ENCODE measurements at regions of chr1 and their contacts with region 1.

Region 1: DNA sequence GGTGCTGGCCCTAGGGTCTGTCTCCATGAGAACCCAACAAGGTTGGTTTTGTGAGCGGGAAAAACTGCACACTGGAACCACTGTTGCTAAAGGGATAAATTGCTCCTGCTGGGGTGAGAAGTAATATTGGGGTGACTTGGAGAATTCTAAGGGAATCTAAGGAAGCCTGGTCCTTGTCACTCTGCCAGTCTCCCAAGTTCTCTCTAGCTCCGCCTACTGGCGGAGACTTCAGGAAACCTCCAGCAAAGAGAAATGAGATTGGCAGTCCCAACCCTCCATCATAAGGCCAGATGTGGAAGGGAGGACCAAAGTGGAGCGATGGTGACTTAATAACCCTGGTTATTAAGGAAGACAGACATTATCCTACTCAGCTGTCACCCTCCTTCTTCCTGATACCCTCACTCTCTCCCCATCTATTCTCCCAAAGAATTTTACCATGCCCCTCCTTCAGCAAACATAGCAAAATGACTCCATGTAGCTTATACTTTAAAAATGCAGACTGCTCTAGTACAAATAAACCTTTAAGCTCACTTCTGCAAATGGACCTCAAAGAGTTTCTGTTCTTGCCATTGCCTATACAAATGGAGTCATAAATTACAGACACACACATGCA is 2.7 kb downstream of the LCE1F start:
- DNase-seq: no peak
- H3K4me3 ChIP-seq: no peak overlapping the region
- H3K27ac ChIP-seq: no peak overlapping the region
- H3K4me1 ChIP-seq: peaks cover 7% of the 10 kb centered on the region
- H3K27me3 ChIP-seq: no peaks in the 10 kb centered on the region
- CTCF ChIP-seq: peak; percentile 29 to 60

Region 2: DNA sequence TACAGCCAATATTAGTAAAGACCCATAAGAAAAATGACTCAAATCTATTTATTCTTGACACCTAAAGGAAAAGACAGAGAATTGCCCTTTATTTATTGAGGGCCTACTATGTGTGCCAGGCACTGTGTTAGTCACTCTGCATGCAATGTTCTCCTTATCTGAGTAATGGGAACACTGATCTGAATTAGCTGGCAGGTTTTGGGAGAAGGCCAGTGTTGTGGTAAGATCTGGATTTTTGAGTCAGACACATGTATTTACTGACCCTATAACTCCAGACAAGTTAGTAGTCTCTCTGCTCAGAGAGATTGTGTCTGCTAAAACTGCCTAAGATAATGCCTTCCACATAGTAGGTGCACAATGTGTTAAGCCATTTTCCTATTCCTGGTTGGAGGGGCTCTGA is 52.4 kb before region 1 on chr1:
- CTCF ChIA-PET with region 1: no interaction called
- dilution Hi-C with region 1: loop called (anchors 5 kb)
- in situ Hi-C with region 1: no loop called
- intact Hi-C with region 1: no loop called
- DNase-seq: peak; percentile 19
- H3K4me3 ChIP-seq: no peak overlapping the region
- H3K27ac ChIP-seq: no peak overlapping the region
- H3K4me1 ChIP-seq: no peaks in the 10 kb centered on the region
- H3K27me3 ChIP-seq: no peaks in the 10 kb centered on the region
- CTCF ChIP-seq: no peak

Region 3: DNA sequence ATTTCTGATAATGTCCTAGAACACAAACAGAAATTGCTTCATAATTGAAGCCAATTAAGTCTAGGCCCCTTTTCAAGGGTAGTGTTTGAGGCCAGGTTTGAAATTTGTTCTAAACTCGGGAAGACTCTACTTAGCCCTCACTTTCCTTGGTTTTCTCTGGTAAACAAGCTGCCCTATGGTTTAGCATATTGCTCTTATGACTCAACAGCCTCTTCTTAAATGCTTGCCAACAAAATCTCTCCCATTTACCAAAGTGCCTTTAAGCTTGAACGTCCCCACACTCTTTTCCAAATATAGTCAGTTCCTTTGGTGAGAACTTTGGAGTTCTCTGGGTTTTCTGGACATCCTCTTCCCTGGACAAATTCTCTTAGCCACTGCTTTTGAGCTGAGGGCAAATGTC is 59.2 kb after region 1 on chr1:
- CTCF ChIA-PET with region 1: no interaction called
- dilution Hi-C with region 1: loop called (anchors 5 kb)
- in situ Hi-C with region 1: no loop called
- intact Hi-C with region 1: no loop called
- DNase-seq: no peak
- H3K4me3 ChIP-seq: no peak overlapping the region
- H3K27ac ChIP-seq: no peak overlapping the region
- H3K4me1 ChIP-seq: no peaks in the 10 kb centered on the region
- H3K27me3 ChIP-seq: no peaks in the 10 kb centered on the region
- CTCF ChIP-seq: no peak

Region 4: GRCh38 chr1:152855661-152856060 is 78.0 kb after region 1 on chr1:
- CTCF ChIA-PET with region 1: no interaction called
- dilution Hi-C with region 1: no loop called
- in situ Hi-C with region 1: no loop called
- intact Hi-C with region 1: loop called (anchors 5 kb)
- DNase-seq: peak; percentile 42
- H3K4me3 ChIP-seq: no peak overlapping the region
- H3K27ac ChIP-seq: no peak overlapping the region
- H3K4me1 ChIP-seq: peaks cover 25% of the 10 kb centered on the region
- H3K27me3 ChIP-seq: no peaks in the 10 kb centered on the region
- CTCF ChIP-seq: no peak

Measured in mammary epithelial cell (primary cell).